ENCODE measurements at regions of chr9 and their contacts with region 1.

Region 1: GRCh38 chr9:2014696-2015580 is at the start of gene SMARCA2:
- DNase-seq: peak; percentile 97 to 98 (median 98)
- H3K4me3 ChIP-seq: peak within 1 kb of the TSS; percentile 84 to 98
- H3K4me3 Mint-ChIP-seq: peak within 1 kb of the TSS; percentile 95 to 100 (median 99)
- H3K27ac ChIP-seq: peak within 1 kb of the TSS; percentile 92
- H3K27ac Mint-ChIP-seq: peak within 1 kb of the TSS; percentile 96 to 100 (median 99)
- H3K4me1 ChIP-seq: peaks cover 29% of the 10 kb centered on the region
- H3K4me1 Mint-ChIP-seq: peaks cover 15 to 40% (median 24%) of the 10 kb centered on the region in 4 donors
- H3K27me3 ChIP-seq: no peaks in the 10 kb centered on the region
- H3K27me3 Mint-ChIP-seq: peaks cover 0 to 3% of the 10 kb centered on the region in 2 donors
- total RNA-seq, gene SMARCA2: 227 to 245 TPM

Region 2: GRCh38 chr9:1994180-1994579 is 20.8 kb before region 1 on chr9:
- CTCF ChIA-PET with region 1: no interaction called
- POLR2A ChIA-PET with region 1: interaction called, 4 read pairs
- intact Hi-C with region 1: loop called (anchors 2 kb)
- DNase-seq: no peak
- H3K4me3 ChIP-seq: no peak overlapping the region
- H3K4me3 Mint-ChIP-seq: no peak overlapping the region
- H3K27ac ChIP-seq: no peak overlapping the region
- H3K27ac Mint-ChIP-seq: no peak overlapping the region
- H3K4me1 ChIP-seq: no peaks in the 10 kb centered on the region
- H3K4me1 Mint-ChIP-seq: no peaks in the 10 kb centered on the region
- H3K27me3 ChIP-seq: no peaks in the 10 kb centered on the region
- H3K27me3 Mint-ChIP-seq: peaks cover 2% of the 10 kb centered on the region in 2 donors

Region 3: GRCh38 chr9:2053883-2054845 is 39.2 kb after region 1 on chr9:
- CTCF ChIA-PET with region 1: interaction called, 10 read pairs
- POLR2A ChIA-PET with region 1: interaction called, 174 read pairs
- intact Hi-C with region 1: loop called (anchors 1 kb)
- DNase-seq: peak; percentile 83 to 88 (median 87)
- H3K4me3 ChIP-seq: peak overlapping the region in 1 of 2 donors; percentile 33
- H3K4me3 Mint-ChIP-seq: peak overlapping the region; percentile 42 to 84 (median 73)
- H3K27ac ChIP-seq: peak overlapping the region; percentile 50
- H3K27ac Mint-ChIP-seq: peak overlapping the region; percentile 93 to 99 (median 96)
- H3K4me1 ChIP-seq: peaks cover 53% of the 10 kb centered on the region
- H3K4me1 Mint-ChIP-seq: peaks cover 42 to 70% (median 54%) of the 10 kb centered on the region in 4 donors
- H3K27me3 ChIP-seq: no peaks in the 10 kb centered on the region
- H3K27me3 Mint-ChIP-seq: no peaks in the 10 kb centered on the region

Region 4: DNA sequence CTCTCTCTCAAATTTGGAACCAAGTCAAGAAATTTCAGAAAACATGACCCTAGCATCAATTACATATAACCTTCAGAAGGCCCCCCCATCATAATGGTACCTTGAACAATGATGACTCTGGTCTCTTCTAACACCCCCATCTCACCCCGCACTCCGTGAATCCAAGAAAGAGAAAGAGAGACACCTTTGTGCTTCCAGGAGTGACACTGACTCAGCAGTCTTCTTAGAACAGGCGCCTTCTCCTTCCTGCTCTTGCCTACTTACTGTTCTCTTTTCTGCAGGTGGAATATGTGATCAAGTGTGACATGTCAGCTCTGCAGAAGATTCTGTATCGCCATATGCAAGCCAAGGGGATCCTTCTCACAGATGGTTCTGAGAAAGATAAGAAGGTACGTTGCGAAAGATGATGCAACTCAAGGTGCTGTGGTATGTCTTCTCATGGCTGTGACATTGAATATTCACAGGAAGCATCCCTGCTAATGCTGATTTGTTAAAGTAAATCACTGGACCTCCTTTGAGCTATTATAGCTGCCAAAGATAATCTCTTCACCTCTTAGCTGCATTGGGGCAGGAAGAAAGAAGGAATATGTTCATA is 81.5 kb after region 1 on chr9:
- CTCF ChIA-PET with region 1: no interaction called
- POLR2A ChIA-PET with region 1: no interaction called
- intact Hi-C with region 1: no loop called
- DNase-seq: no peak
- H3K4me3 ChIP-seq: no peak overlapping the region
- H3K4me3 Mint-ChIP-seq: no peak overlapping the region
- H3K27ac ChIP-seq: no peak overlapping the region
- H3K27ac Mint-ChIP-seq: peak overlapping the region in 1 of 7 donors; percentile 58
- H3K4me1 ChIP-seq: no peaks in the 10 kb centered on the region
- H3K4me1 Mint-ChIP-seq: peaks cover 0 to 14% (median 3%) of the 10 kb centered on the region in 4 donors
- H3K27me3 ChIP-seq: no peaks in the 10 kb centered on the region
- H3K27me3 Mint-ChIP-seq: no peaks in the 10 kb centered on the region

Region 5: DNA sequence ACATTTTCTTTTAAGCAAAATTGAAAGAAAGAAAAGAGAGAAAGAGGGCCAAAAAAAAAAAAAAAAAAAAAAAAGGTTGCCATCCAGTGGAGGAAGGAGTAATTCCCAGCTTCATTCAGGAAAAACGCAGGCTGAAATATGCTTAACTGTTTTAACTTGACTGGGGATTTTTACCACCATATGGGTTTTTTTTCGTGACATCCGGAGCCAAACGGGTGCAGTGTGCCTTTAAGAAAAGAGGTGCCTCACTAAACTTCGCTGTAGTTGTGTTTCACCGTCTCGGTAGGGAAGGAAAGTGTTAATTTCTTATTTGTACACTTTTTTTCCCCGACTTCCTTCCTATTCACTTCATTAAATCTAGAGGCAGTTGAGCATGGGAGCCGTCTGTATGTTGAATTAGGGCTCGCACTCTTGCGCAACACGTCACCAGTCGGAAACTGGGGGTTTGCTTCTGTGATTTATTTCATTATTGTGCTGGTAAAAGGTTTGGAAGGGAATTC is 143.2 kb after region 1 on chr9:
- CTCF ChIA-PET with region 1: interaction called, 3 read pairs
- POLR2A ChIA-PET with region 1: no interaction called
- intact Hi-C with region 1: loop called (anchors 2 kb)
- DNase-seq: peak; percentile 52 to 74 (median 63)
- H3K4me3 ChIP-seq: peak overlapping the region; percentile 36 to 48
- H3K4me3 Mint-ChIP-seq: peak overlapping the region; percentile 85 to 92 (median 90)
- H3K27ac ChIP-seq: peak overlapping the region; percentile 24
- H3K27ac Mint-ChIP-seq: peak overlapping the region; percentile 65 to 92 (median 85)
- H3K4me1 ChIP-seq: peaks cover 60% of the 10 kb centered on the region
- H3K4me1 Mint-ChIP-seq: peaks cover 42 to 81% (median 62%) of the 10 kb centered on the region in 4 donors
- H3K27me3 ChIP-seq: no peaks in the 10 kb centered on the region
- H3K27me3 Mint-ChIP-seq: no peaks in the 10 kb centered on the region

Measured in CD4-positive, alpha-beta memory T cell (primary cell).